Lower lobe of right lung (tissue), 2 donors: ENCODE measurements at regions of chr15 and their contacts with region 1.

Region 1: GRCh38 chr15:45402162-45402954 is 24.0 kb upstream of the GATM start:
- DNase-seq: peak; percentile 97
- ATAC-seq: peak; percentile 97 to 98
- H3K4me3 ChIP-seq: peak overlapping the region; percentile 70
- H3K27ac ChIP-seq: peak overlapping the region; percentile 88
- H3K4me1 ChIP-seq: peaks cover 33% of the 10 kb centered on the region
- H3K27me3 ChIP-seq: no peaks in the 10 kb centered on the region
- CTCF ChIP-seq: no peak

Region 2: DNA sequence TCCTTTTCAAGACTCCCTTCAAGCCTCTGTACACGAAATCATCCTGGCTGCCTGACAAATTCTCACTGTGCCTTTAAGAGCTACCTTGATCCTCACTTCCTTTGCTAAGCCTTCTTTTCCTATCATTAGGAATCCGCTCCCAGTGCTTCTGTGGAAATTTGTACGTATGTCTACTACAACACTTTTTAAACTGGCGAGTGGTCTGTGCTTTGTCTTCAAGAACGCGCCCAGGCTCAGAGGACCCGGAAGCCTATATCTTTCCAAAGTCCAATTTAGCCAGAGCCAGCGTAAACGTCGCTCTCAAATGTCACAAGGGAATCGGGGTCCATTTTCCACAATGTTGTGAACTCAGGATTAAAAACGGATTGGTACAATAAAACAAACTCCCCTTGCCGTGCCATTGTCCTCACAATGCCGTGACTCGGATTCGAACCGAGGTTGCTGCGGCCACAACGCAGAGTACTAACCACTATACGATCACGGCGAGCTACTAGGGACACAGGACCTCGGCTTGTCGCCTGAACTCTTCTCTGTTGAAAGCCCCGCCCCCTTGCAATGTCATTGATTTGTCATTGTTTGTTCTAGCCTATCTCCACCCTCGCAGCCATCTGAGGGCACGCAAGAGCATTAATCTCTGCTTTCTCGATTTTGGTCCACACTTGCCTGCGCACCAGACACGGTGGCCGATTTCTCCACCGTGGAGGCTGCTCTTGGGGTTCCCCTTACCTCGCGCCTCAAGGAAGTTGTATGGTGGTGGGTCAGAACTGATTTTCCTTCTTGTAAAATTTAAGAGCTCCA is 202.2 kb before region 1 on chr15:
- intact Hi-C with region 1: loop called (anchors 10 kb)
- DNase-seq: peak; percentile 92
- ATAC-seq: peak; percentile 84 to 91
- H3K4me3 ChIP-seq: peak overlapping the region; percentile 75
- H3K27ac ChIP-seq: peak overlapping the region; percentile 98
- H3K4me1 ChIP-seq: peaks cover 16% of the 10 kb centered on the region
- H3K27me3 ChIP-seq: no peaks in the 10 kb centered on the region
- CTCF ChIP-seq: no peak

Region 3: GRCh38 chr15:45314960-45315359 is 87.4 kb before region 1 on chr15:
- intact Hi-C with region 1: loop called (anchors 10 kb)
- DNase-seq: no peak
- ATAC-seq: no peak
- H3K4me3 ChIP-seq: no peak overlapping the region
- H3K27ac ChIP-seq: no peak overlapping the region
- H3K4me1 ChIP-seq: no peaks in the 10 kb centered on the region
- H3K27me3 ChIP-seq: peaks cover 5% of the 10 kb centered on the region
- CTCF ChIP-seq: no peak